Left cardiac atrium (tissue), 4 donors: ENCODE measurements at regions of chr6 and their contacts with region 1.

Region 1: DNA sequence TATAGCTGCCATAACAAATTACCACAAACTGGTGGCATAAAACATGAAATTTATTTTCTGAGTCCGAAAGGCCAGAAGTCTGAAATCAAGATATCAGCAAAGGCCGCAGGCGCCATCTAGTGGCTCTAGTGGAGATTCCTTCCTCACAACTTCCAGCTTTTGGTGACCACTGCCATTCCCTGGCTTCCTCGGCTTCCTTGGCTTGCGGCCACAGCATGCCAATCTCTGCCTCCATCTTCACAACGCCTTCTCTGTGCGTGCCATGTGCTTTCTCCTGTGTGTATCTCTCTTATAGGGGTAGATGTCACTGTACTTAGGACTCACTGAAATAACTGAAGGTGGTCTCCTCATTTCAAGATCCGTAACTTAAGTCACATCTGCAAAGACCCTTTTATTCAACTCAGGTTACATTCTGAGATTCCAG is 5.4 kb upstream of the PLAGL1 start:
- DNase-seq: peak; percentile 82
- ATAC-seq: peak; percentile 47 to 71

Region 2: DNA sequence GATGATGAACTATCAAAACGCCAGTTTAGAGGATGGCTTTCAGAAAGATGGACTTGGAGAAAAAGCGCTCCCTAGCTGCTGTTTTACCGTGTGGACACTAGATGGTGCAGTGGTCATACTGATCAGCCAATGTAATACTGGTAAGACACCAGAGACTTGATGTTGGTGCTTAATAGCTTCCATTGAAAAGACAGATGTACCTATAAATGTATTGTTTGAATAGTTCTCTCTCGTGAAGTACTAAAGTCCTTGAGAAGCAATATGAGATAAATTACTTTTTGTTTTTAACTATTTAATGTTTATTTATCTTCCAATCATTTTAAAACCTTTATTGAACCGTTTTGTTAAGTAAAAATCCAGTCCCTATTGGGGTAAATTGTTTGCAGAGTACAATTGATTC is 438.1 kb before region 1 on chr6:
- intact Hi-C with region 1: loop called (anchors 1 to 5 kb)
- DNase-seq: no peak
- ATAC-seq: peak; percentile 84 to 89

Region 3: GRCh38 chr6:143939364-143939763 is 74.1 kb before region 1 on chr6:
- intact Hi-C with region 1: loop called in 1 of 2 experiments (anchors 5 kb)
- DNase-seq: no peak
- ATAC-seq: no peak

Region 4: GRCh38 chr6:143961886-143962873 is 51.3 kb before region 1 on chr6:
- intact Hi-C with region 1: no loop called
- DNase-seq: no peak
- ATAC-seq: peak in 1 of 2 donors; percentile 67

Region 5: GRCh38 chr6:144482142-144482541 is 468.6 kb after region 1 on chr6:
- intact Hi-C with region 1: no loop called
- DNase-seq: peak; percentile 81
- ATAC-seq: peak in 1 of 2 donors; percentile 61